Activated T-helper 1 cell treated with anti-CD3 and anti-CD28 coated beads, Interleukin-12 subunit alpha, Interleukin-12 subunit beta, Interleukin-2, Interleukin-4 antibody, amounts not matched to agents 30 ng/mL and 10 ng/mL and 1 ng/mL, durations not matched to agents 14 hours and 24 hours and 36 hours (primary cell): ENCODE measurements at regions of chr12 and their contacts with region 1.

Region 1: GRCh38 chr12:95532851-95533250 is 18.4 kb downstream of the USP44 start:
- DNase-seq: no peak
- H3K4me3 Mint-ChIP-seq: no peak overlapping the region
- H3K27ac Mint-ChIP-seq: no peak overlapping the region
- H3K4me1 Mint-ChIP-seq: peaks cover 7% of the 10 kb centered on the region
- H3K27me3 Mint-ChIP-seq: no peaks in the 10 kb centered on the region

Region 2: GRCh38 chr12:95117178-95117599 is 415.7 kb before region 1 on chr12:
- intact Hi-C with region 1: loop called (anchors 1 kb)
- DNase-seq: peak; percentile 26
- H3K4me3 Mint-ChIP-seq: no peak overlapping the region
- H3K27ac Mint-ChIP-seq: no peak overlapping the region
- H3K4me1 Mint-ChIP-seq: no peaks in the 10 kb centered on the region
- H3K27me3 Mint-ChIP-seq: no peaks in the 10 kb centered on the region

Region 3: GRCh38 chr12:95336390-95337067 is 196.3 kb before region 1 on chr12:
- intact Hi-C with region 1: loop called (anchors 10 kb)
- DNase-seq: no peak
- H3K4me3 Mint-ChIP-seq: no peak overlapping the region
- H3K27ac Mint-ChIP-seq: no peak overlapping the region
- H3K4me1 Mint-ChIP-seq: peaks cover 6% of the 10 kb centered on the region
- H3K27me3 Mint-ChIP-seq: peaks cover 2% of the 10 kb centered on the region

Region 4: DNA sequence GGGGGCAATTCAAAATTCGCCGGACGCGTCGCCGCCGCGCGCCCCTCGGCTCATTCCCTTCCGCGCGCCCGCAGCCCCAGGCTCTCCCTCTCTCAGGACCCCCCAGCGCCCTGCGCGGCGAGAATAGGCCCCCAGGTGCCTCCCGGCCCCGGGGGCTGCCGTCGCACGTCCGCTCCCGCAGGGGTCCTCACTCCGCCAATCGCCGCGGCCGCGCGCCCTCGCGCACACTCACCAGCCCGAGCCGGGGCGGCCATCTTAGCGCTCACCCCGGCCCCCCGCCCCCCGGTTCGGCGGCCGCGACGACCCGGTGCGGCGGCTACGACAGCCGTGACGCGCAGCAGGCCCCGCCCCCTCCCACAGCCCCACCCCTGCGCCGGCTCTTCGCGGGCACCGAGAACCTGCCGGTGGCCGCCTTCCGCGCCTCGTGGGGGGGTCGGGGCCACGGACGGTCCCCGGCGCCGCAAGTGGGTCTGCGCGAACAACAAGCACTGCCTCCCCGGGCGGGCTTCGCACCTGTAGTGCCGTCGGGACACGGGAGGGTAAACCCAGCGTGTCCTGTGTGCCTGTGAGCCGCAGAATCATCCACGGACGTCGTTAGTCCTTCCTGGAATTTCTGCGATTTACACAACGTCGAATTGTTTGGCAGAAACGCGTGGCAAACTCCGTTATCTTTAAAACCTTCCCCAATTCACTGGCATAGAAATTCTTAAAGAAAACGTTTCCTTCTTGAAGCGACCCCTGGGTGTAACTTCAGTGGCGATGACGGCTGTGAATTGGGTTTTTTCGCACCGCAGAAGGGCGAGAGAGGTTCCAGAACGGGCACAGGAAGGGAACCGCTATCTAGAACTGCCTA is 15.9 kb after region 1 on chr12:
- intact Hi-C with region 1: loop called (anchors 1 kb)
- DNase-seq: peak; percentile 66
- H3K4me3 Mint-ChIP-seq: peak overlapping the region; percentile 91
- H3K27ac Mint-ChIP-seq: peak overlapping the region; percentile 62
- H3K4me1 Mint-ChIP-seq: peaks cover 34% of the 10 kb centered on the region
- H3K27me3 Mint-ChIP-seq: peaks cover 3% of the 10 kb centered on the region

Region 5: DNA sequence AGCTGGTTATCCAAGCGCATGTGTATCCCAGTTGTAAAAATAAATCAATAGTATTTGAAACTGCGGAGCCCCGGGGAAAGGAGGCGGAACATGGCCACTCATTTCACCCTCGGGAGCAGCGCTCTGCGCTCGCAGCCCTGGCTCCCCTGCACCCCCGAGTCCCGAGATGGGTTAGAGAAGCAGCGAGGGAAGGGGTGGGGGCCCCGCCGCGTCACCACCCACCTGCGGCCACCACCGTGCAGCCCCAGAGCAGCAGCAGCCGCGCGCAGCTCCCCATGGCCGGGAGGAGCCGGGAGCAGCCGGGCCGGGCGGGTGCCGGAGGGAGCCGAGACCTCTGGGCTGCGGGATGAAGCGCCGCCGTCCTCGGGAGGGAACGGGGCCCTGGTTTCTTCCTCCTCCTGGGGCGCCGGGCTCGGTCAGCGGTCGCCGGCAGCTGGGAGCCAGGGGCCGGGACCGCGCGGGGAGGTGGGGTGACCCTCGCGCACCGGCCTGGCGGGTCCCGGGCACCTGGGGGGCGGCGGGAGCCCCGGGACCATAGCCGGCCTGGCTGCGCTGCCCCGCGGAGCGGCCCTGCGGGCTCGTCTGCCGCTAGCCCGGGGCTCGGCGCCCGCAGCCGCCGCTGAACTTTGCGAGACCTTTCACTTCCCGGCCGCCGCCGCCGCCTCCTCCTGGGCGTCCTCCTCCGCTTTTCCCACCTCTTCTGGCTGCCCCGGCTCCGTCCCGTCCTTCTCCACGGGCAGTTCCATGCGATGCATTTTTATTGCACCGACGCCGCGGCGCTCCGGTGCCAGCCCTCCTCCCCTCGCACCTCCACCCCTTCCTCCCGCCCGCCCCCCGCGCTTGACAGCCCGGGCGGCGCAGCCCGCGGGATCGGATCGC is 257.4 kb after region 1 on chr12 and contains the start of gene NTN4:
- intact Hi-C with region 1: no loop called
- DNase-seq: no peak
- H3K4me3 Mint-ChIP-seq: peak within 1 kb of the TSS; percentile 76
- H3K27ac Mint-ChIP-seq: no peak within 1 kb of the TSS
- H3K4me1 Mint-ChIP-seq: peaks cover 10% of the 10 kb centered on the region
- H3K27me3 Mint-ChIP-seq: peaks cover 76% of the 10 kb centered on the region
- total RNA-seq, gene NTN4: not detected in 2 replicates